ENCODE measurements at regions of chr19 and their contacts with region 1.

Region 1: GRCh38 chr19:4633140-4633967 is 6.0 kb upstream of the TNFAIP8L1 start:
- DNase-seq: peak in 5 of 6 donors; percentile 56 to 70 (median 63)
- ATAC-seq: peak; percentile 70 to 86 (median 82)
- H3K4me3 ChIP-seq: no peak overlapping the region
- H3K27ac ChIP-seq: no peak overlapping the region
- H3K4me1 ChIP-seq: peaks cover 0 to 8% (median 0%) of the 10 kb centered on the region in 3 donors
- H3K27me3 ChIP-seq: no peaks in the 10 kb centered on the region
- CTCF ChIP-seq: peak; percentile 33 to 66 (median 52)

Region 2: GRCh38 chr19:4557971-4558941 is 75.1 kb before region 1 on chr19:
- intact Hi-C with region 1: no loop called
- DNase-seq: peak in 3 of 6 donors; percentile 59 to 83 (median 82)
- ATAC-seq: peak; percentile 39 to 76 (median 68)
- H3K4me3 ChIP-seq: peak overlapping the region in 1 of 4 donors; percentile 25
- H3K27ac ChIP-seq: no peak overlapping the region
- H3K4me1 ChIP-seq: no peaks in the 10 kb centered on the region
- H3K27me3 ChIP-seq: no peaks in the 10 kb centered on the region
- CTCF ChIP-seq: peak; percentile 99

Region 3: DNA sequence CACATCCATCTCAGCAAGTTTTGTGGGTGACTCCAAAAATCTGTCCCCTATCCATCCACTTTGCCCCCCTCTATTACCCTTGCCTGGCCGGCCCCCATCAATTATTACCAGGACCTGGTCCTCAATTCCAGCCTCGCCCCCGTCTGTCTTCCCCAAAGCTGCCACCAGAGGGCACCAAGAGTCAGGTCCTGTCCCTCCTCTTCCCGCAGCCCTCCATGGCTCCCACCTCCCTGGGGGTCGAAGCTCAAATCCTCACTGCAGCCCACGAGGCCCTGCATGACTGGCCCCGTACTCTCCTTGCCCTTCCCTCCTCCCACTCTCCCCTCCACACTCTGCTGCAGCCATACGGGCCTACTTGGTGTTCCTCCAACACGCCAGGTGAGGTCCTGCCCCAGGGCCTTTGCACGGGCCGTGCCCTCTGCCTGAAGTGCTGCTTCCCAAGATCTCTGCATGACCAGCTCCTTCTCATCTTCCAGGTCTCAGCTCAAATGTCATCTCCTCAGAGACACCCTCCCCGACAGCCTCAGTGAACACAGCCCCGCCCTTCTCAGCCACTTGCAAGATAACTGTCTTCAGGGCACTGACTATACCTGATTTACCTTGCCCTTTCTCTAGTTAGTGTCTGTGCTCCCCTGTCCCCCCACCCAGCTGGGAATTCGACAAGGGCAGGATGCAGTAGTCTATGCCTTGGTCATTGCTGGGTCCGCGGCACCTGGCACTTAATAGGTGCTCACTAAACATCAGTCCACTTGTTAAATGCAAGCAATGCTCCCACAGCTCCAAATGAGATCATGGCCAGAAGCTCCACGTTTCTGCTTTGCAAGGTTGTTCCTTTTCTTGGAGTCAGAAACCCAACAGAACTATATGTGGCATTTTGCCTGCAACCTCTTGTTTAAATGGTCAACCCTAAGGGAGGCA is 57.1 kb before region 1 on chr19:
- intact Hi-C with region 1: loop called in 2 of 3 experiments (anchors 5 kb)
- DNase-seq: peak in 5 of 6 donors; percentile 37 to 87 (median 69)
- ATAC-seq: peak; percentile 46 to 79 (median 71)
- H3K4me3 ChIP-seq: no peak overlapping the region
- H3K27ac ChIP-seq: peak overlapping the region in 1 of 4 donors; percentile 46
- H3K4me1 ChIP-seq: no peaks in the 10 kb centered on the region
- H3K27me3 ChIP-seq: peaks cover 0 to 10% (median 0%) of the 10 kb centered on the region in 4 donors
- CTCF ChIP-seq: peak; percentile 31 to 51 (median 39)

Measured in pancreas (tissue), 10 donors.